Activated CD8-positive, alpha-beta T cell treated with anti-CD3 and anti-CD28 coated beads for 36 hours (primary cell): ENCODE measurements at regions of chr19 and their contacts with region 1.

Region 1: GRCh38 chr19:50922317-50922853 is 11.2 kb upstream of the KLK4 start:
- DNase-seq: peak; percentile 84
- ATAC-seq: peak; percentile 100
- H3K4me3 Mint-ChIP-seq: no peak overlapping the region
- H3K27ac Mint-ChIP-seq: no peak overlapping the region
- H3K4me1 Mint-ChIP-seq: peaks cover 8% of the 10 kb centered on the region
- H3K27me3 Mint-ChIP-seq: peaks cover 39% of the 10 kb centered on the region
- CTCF ChIP-seq: peak; percentile 92

Region 2: DNA sequence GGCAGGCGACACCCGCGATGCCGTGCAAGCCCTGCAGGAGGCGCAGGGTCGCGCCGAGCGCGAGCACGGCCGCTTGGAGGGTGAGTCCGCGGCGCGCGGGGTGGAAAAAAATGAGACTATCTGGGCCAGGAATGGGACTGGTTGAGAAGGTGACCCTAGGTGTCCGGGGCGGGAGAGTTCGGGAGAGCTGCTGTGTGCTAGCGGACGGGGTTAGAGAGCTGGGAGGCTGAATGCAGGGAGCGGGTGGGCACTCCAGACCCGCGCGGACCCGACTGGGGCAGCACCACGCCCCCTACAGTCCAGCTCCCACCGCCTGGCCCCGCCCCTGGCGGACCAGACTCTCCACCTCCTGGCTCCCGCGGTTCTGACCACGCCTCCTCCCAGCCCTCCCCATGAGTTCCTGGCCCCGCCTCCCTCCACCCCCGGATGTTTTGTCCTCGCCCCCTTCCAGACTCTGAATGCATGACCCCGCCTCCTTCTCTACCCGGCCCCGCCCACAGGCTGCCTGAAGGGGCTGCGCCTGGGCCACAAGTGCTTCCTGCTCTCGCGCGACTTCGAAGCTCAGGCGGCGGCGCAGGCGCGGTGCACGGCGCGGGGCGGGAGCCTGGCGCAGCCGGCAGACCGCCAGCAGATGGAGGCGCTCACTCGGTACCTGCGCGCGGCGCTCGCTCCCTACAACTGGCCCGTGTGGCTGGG is 197.7 kb before region 1 on chr19:
- CTCF ChIA-PET with region 1: interaction called, 12 read pairs
- POLR2A ChIA-PET with region 1: interaction called, 3 read pairs
- intact Hi-C with region 1: no loop called
- DNase-seq: peak; percentile 99
- ATAC-seq: peak; percentile 86
- H3K4me3 Mint-ChIP-seq: peak overlapping the region; percentile 83
- H3K27ac Mint-ChIP-seq: peak overlapping the region; percentile 84
- H3K4me1 Mint-ChIP-seq: peaks cover 25% of the 10 kb centered on the region
- H3K27me3 Mint-ChIP-seq: peaks cover 42% of the 10 kb centered on the region
- CTCF ChIP-seq: peak; percentile 85

Region 3: DNA sequence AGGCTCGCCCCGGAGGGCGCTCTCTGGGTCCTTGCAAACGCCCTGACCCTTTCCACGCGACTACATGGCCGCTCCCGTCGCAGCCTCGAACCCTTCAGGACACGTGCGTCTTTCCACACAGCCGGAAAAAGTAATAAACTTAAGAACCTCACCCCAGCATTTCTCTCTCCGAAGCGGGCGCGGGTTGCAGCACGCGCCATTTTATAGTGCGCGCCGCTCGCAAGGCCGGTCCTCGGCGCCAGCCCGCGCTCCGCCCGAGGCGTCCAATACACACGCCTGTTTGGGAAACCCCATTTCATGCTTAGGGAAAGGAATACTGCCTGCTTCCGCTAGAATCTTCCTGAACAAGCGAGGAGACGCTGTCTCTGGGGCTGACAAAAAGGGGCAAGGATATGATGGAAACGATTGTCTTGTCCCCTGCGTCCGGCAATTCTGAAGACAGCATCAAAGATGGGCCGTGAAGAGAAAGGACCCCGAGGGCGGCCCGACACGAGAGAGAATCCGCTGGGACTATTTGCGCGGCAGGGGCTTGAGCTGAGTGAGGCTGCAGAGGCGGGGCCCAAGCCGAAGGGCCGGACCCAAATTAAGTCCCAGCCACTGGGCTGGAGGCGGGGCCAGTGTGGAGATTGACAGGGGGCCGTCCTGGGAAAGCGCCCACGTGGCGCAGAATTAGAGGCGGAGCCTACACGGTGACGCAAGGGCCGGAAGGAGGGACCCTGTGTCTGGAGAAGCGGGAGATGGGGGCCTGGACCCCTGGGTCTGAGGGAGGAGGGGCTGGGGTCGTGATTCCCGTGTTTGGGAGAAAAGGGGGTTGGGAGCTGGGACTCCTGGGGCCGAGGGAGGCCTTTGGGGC is 117.7 kb before region 1 on chr19:
- CTCF ChIA-PET with region 1: interaction called, 6 read pairs
- POLR2A ChIA-PET with region 1: interaction called, 7 read pairs
- intact Hi-C with region 1: loop called (anchors 10 kb)
- DNase-seq: peak; percentile 100
- ATAC-seq: peak; percentile 97
- H3K4me3 Mint-ChIP-seq: peak overlapping the region; percentile 95
- H3K27ac Mint-ChIP-seq: peak overlapping the region; percentile 100
- H3K4me1 Mint-ChIP-seq: peaks cover 29% of the 10 kb centered on the region
- H3K27me3 Mint-ChIP-seq: no peaks in the 10 kb centered on the region
- CTCF ChIP-seq: no peak

Region 4: GRCh38 chr19:50933640-50934039 is 11.3 kb after region 1 on chr19:
- CTCF ChIA-PET with region 1: interaction called, 26 read pairs
- POLR2A ChIA-PET with region 1: no interaction called
- intact Hi-C with region 1: no loop called
- DNase-seq: no peak
- ATAC-seq: no peak
- H3K4me3 Mint-ChIP-seq: no peak overlapping the region
- H3K27ac Mint-ChIP-seq: no peak overlapping the region
- H3K4me1 Mint-ChIP-seq: no peaks in the 10 kb centered on the region
- H3K27me3 Mint-ChIP-seq: peaks cover 35% of the 10 kb centered on the region
- CTCF ChIP-seq: no peak